ENCODE measurements at regions of chr9 and their contacts with region 1.

Region 1: DNA sequence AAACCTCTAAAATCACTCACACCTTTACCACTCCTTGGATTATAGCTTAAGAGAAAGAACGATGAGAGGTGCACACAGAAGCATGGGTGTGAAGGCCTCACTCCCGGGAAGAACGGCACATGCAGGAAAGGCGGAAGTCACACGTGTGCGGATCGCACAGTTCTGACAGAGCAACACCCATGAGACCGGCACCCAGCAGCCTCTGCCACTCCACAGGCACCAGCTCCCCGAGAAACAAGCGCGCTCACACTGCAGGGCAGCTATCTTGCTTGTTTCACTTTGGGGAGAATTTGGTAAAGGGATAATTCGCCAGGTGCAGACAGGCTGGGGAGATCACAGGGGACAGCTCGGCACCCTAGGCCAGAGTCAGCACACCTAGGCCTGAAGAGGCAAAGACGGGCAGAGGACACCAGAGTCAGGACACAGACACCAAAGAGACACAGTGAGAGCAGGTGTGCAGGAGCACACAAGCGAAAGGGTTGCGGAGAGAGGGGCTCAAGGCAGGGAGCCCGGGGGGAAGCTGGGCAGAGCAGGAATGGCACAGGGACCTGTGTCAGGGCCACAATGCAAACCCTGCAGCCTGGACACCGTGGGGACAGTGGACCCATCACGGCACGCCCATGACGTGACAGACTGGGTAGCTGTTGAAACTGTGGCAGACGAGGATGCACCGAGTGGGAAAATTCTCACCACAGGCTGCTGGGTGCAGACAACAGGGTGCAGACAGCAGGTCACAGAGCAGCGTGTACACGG is 81.7 kb downstream of the CAMSAP1 start:
- DNase-seq: no peak
- ATAC-seq: no peak; the same call in 1 of the 2 replicates
- H3K4me3 ChIP-seq: no peak overlapping the region
- H3K27ac ChIP-seq: no peak overlapping the region
- H3K4me1 ChIP-seq: no peaks in the 10 kb centered on the region
- H3K27me3 ChIP-seq: no peaks in the 10 kb centered on the region
- CTCF ChIP-seq: no peak

Region 2: GRCh38 chr9:135876936-135877335 is 51.3 kb after region 1 on chr9:
- CTCF ChIA-PET with region 1: no interaction called
- POLR2A ChIA-PET with region 1: interaction called, 13 read pairs
- in situ Hi-C with region 1: no loop called
- intact Hi-C with region 1: no loop called
- DNase-seq: no peak
- ATAC-seq: no peak
- H3K4me3 ChIP-seq: no peak overlapping the region
- H3K27ac ChIP-seq: no peak overlapping the region
- H3K4me1 ChIP-seq: no peaks in the 10 kb centered on the region
- H3K27me3 ChIP-seq: no peaks in the 10 kb centered on the region
- CTCF ChIP-seq: no peak